ENCODE measurements at regions of chr2 and their contacts with region 1.

Region 1: GRCh38 chr2:234500394-234501006 is 3.6 kb upstream of the ARL4C start:
- DNase-seq: peak; percentile 61 to 71
- H3K4me3 ChIP-seq: no peak overlapping the region
- H3K27ac ChIP-seq: no peak overlapping the region
- H3K4me1 ChIP-seq: peaks cover 8% of the 10 kb centered on the region in 2 donors
- H3K27me3 ChIP-seq: no peaks in the 10 kb centered on the region
- CTCF ChIP-seq: peak in 5 of 6 experiments; percentile 34 to 80 (median 62)
- POLR2A ChIP-seq: no peak

Region 2: GRCh38 chr2:234135720-234136221 is 364.7 kb before region 1 on chr2:
- intact Hi-C with region 1: loop called (anchors 5 kb)
- DNase-seq: peak; percentile 48 to 56
- H3K4me3 ChIP-seq: no peak overlapping the region
- H3K27ac ChIP-seq: no peak overlapping the region
- H3K4me1 ChIP-seq: no peaks in the 10 kb centered on the region
- H3K27me3 ChIP-seq: no peaks in the 10 kb centered on the region
- CTCF ChIP-seq: peak in 5 of 6 experiments; percentile 21 to 86 (median 81)
- POLR2A ChIP-seq: no peak

Region 3: GRCh38 chr2:234288974-234289455 is 211.5 kb before region 1 on chr2:
- intact Hi-C with region 1: loop called (anchors 2 kb)
- DNase-seq: peak; percentile 55 to 66
- H3K4me3 ChIP-seq: no peak overlapping the region
- H3K27ac ChIP-seq: no peak overlapping the region
- H3K4me1 ChIP-seq: no peaks in the 10 kb centered on the region
- H3K27me3 ChIP-seq: no peaks in the 10 kb centered on the region
- CTCF ChIP-seq: peak; percentile 38 to 83 (median 65)
- POLR2A ChIP-seq: no peak

Measured in thyroid gland (tissue), 4 donors.